HEK293 (cell line): ENCODE measurements at regions of chr11 and their contacts with region 1.

Region 1: GRCh38 chr11:70816156-70816678 is 417.9 kb downstream of the CTTN start:
- H3K4me3 ChIP-seq: no peak overlapping the region
- H3K27ac ChIP-seq: no peak overlapping the region
- H3K4me1 ChIP-seq: no peaks in the 10 kb centered on the region
- CTCF ChIP-seq: no peak

Region 2: DNA sequence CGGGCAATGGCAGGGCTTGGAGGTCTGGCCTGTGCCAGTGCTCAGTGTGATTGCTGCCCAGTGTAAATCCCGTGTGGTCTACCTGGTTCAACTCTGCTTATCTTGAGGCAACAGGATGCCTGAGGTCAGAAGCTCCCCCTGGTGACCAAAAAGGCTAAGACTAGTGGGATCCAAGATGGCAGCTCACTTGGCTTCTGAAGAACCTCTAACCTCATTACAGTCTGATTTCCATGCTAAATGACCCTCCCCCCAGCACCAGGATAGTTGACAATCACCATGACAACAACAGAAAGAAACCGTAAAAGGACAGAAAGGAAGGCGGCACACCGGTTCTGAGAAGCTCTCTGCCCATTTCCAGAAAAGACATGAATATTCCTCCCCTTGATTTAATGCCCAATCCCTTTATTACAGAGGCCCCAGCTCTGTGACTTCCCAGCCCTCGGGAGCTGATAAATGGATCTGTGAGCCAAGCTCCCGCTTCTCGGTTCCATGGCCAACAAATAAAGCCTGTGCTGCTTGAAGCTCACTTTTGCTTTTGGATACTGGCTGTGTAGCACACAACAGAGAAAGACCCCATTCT is 19.5 kb before region 1 on chr11:
- CTCF ChIA-PET with region 1: interaction called, 10 read pairs
- POLR2A ChIA-PET with region 1: no interaction called
- H3K4me3 ChIP-seq: no peak overlapping the region
- H3K27ac ChIP-seq: no peak overlapping the region
- H3K4me1 ChIP-seq: no peaks in the 10 kb centered on the region
- CTCF ChIP-seq: no peak

Region 3: GRCh38 chr11:70826541-70827335 is 10.5 kb after region 1 on chr11:
- CTCF ChIA-PET with region 1: interaction called, 15 read pairs
- POLR2A ChIA-PET with region 1: no interaction called
- H3K4me3 ChIP-seq: no peak overlapping the region
- H3K27ac ChIP-seq: no peak overlapping the region
- H3K4me1 ChIP-seq: no peaks in the 10 kb centered on the region
- CTCF ChIP-seq: no peak

Region 4: DNA sequence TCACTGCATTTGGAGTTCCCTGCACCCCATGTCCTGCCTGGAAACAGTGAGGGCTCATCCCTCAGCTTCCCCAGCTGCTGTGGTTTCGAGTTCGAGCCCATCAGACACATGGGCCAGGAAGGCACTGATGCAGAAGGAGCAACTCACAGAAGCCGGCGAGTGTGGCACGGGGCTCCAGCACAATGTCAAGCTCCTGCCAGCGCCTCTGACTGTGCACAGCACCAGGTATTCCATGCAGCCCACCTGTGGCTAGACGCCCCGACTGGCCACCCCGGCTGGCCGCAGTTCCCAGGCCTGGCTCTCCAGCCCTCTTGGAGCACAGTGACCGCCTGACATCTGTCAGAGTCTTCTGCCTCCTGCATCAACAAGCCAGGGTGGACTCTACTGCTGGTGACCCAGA is 16.8 kb after region 1 on chr11:
- CTCF ChIA-PET with region 1: interaction called, 12 read pairs
- POLR2A ChIA-PET with region 1: no interaction called
- H3K4me3 ChIP-seq: no peak overlapping the region
- H3K27ac ChIP-seq: no peak overlapping the region
- H3K4me1 ChIP-seq: no peaks in the 10 kb centered on the region
- CTCF ChIP-seq: no peak